ENCODE measurements at regions of chr17 and their contacts with region 1.

Region 1: GRCh38 chr17:76726231-76726775 is at the start of gene JMJD6:
- DNase-seq: peak in 5 of 9 experiments; percentile 88 to 95 (median 93)
- ATAC-seq: peak; percentile 77
- H3K4me3 ChIP-seq: peak within 1 kb of the TSS; percentile 87 to 92
- H3K4me3 Mint-ChIP-seq: peak within 1 kb of the TSS; percentile 99
- H3K27ac ChIP-seq: peak within 1 kb of the TSS; percentile 98 to 99
- H3K27ac Mint-ChIP-seq: peak within 1 kb of the TSS; percentile 99
- H3K4me1 ChIP-seq: peaks cover 46% of the 10 kb centered on the region
- H3K4me1 Mint-ChIP-seq: peaks cover 57% of the 10 kb centered on the region
- H3K27me3 ChIP-seq: no peaks in the 10 kb centered on the region
- H3K27me3 Mint-ChIP-seq: no peaks in the 10 kb centered on the region
- CTCF ChIP-seq: no peak
- total RNA-seq, gene JMJD6: 316 to 336 TPM

Region 2: DNA sequence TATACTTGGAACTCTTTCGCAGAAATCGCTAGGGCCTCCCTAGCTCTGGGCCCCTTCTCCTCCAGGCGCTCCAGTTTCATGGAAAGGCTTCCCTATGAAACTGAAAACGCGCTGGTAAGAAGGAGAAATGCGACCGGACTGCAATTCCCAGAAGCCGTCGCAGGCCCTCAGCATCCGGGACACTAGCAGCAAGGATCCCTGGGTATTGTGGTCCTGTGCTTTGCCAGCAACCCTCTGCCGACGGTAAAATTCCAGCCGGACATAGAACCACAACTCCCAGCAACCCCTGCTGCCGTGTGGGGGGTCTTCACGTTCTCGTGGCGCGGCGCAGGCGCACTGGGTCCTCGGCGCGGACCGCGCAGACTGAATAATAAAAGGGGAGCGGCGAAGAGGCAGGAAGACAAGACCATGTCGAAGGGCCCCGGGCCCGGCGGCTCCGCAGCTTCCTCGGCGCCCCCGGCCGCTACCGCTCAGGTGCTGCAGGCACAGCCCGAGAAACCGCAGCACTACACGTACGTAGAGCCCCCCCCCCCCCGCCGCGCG is 941.8 kb before region 1 on chr17 and contains the start of gene UNK:
- CTCF ChIA-PET with region 1: no interaction called
- POLR2A ChIA-PET with region 1: no interaction called
- intact Hi-C with region 1: loop called in 1 of 2 experiments (anchors 2 kb)
- DNase-seq: peak; percentile 91 to 99 (median 96)
- ATAC-seq: peak; percentile 64
- H3K4me3 ChIP-seq: peak within 1 kb of the TSS; percentile 57 to 78
- H3K4me3 Mint-ChIP-seq: peak within 1 kb of the TSS; percentile 93
- H3K27ac ChIP-seq: peak within 1 kb of the TSS; percentile 95 to 100
- H3K27ac Mint-ChIP-seq: peak within 1 kb of the TSS; percentile 98
- H3K4me1 ChIP-seq: peaks cover 39% of the 10 kb centered on the region
- H3K4me1 Mint-ChIP-seq: peaks cover 49% of the 10 kb centered on the region
- H3K27me3 ChIP-seq: no peaks in the 10 kb centered on the region
- H3K27me3 Mint-ChIP-seq: no peaks in the 10 kb centered on the region
- CTCF ChIP-seq: no peak
- total RNA-seq, gene UNK: 37.3 to 42.8 TPM

Region 3: GRCh38 chr17:76753061-76753961 is 27.0 kb after region 1 on chr17:
- CTCF ChIA-PET with region 1: interaction called, 3 read pairs
- POLR2A ChIA-PET with region 1: interaction called, 4 read pairs
- intact Hi-C with region 1: loop called in 1 of 2 experiments (anchors 1 kb)
- DNase-seq: peak in 6 of 9 experiments; percentile 16 to 87 (median 58)
- ATAC-seq: peak; percentile 82
- H3K4me3 ChIP-seq: peak overlapping the region; percentile 40 to 54
- H3K4me3 Mint-ChIP-seq: peak overlapping the region; percentile 84
- H3K27ac ChIP-seq: peak overlapping the region; percentile 86 to 93
- H3K27ac Mint-ChIP-seq: peak overlapping the region; percentile 98
- H3K4me1 ChIP-seq: peaks cover 20% of the 10 kb centered on the region
- H3K4me1 Mint-ChIP-seq: peaks cover 23% of the 10 kb centered on the region
- H3K27me3 ChIP-seq: no peaks in the 10 kb centered on the region
- H3K27me3 Mint-ChIP-seq: no peaks in the 10 kb centered on the region
- CTCF ChIP-seq: no peak

Region 4: GRCh38 chr17:76772842-76773525 is 46.7 kb after region 1 on chr17:
- CTCF ChIA-PET with region 1: interaction called, 3 read pairs
- POLR2A ChIA-PET with region 1: interaction called, 5 read pairs
- intact Hi-C with region 1: loop called in 1 of 2 experiments (anchors 1 kb)
- DNase-seq: peak in 8 of 9 experiments; percentile 32 to 89 (median 62)
- ATAC-seq: peak; percentile 88
- H3K4me3 ChIP-seq: peak overlapping the region; percentile 30 to 39
- H3K4me3 Mint-ChIP-seq: peak overlapping the region; percentile 70
- H3K27ac ChIP-seq: peak overlapping the region; percentile 60 to 87
- H3K27ac Mint-ChIP-seq: peak overlapping the region; percentile 97
- H3K4me1 ChIP-seq: peaks cover 11% of the 10 kb centered on the region
- H3K4me1 Mint-ChIP-seq: peaks cover 20% of the 10 kb centered on the region
- H3K27me3 ChIP-seq: no peaks in the 10 kb centered on the region
- H3K27me3 Mint-ChIP-seq: no peaks in the 10 kb centered on the region
- CTCF ChIP-seq: no peak

Region 5: GRCh38 chr17:76816590-76817135 is 90.4 kb after region 1 on chr17:
- CTCF ChIA-PET with region 1: no interaction called
- POLR2A ChIA-PET with region 1: no interaction called
- intact Hi-C with region 1: loop called in 1 of 2 experiments (anchors 5 kb)
- DNase-seq: peak; percentile 14 to 78 (median 65)
- ATAC-seq: peak; percentile 97
- H3K4me3 ChIP-seq: no peak overlapping the region
- H3K4me3 Mint-ChIP-seq: peak overlapping the region; percentile 3
- H3K27ac ChIP-seq: no peak overlapping the region
- H3K27ac Mint-ChIP-seq: no peak overlapping the region
- H3K4me1 ChIP-seq: peaks cover 7% of the 10 kb centered on the region
- H3K4me1 Mint-ChIP-seq: peaks cover 8% of the 10 kb centered on the region
- H3K27me3 ChIP-seq: no peaks in the 10 kb centered on the region
- H3K27me3 Mint-ChIP-seq: no peaks in the 10 kb centered on the region
- CTCF ChIP-seq: peak; percentile 76

Region 6: DNA sequence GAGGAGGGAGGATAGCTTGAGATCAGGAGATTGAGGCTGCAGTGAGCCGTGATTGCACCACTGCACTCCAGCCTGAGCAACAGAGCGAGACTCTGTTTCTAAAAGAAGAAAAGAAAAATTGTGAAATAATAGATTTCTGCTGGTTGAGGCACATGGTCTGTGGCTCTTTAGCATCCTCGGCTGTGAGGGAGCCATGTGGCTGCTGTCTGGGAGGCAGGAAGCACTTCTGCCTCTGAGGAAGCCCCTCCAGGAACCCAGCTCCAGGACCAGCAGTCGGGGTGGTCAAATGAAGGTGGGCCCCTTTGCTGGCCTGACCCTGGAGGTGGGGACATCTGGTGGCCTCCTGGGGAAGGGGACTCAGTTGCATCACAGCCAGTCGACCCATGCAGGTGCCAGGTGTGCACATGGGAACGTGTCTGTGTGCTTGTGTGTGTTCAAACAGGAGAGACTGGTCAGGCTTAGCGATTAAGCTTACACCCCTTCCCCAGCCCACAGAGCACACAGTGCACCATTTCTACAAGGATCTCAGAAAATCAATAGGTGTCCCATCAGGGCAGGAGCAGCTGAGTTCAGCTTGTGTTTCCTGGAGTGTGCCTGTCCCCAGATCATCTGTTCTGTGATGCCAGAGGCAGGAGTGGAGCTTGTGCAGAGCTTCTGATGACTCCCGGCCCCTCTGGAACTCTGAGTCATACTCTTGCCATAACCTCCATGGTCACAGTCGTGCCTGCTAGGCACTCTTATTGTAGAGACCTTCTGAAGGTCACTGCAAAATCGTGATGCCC is 117.6 kb after region 1 on chr17:
- CTCF ChIA-PET with region 1: no interaction called
- POLR2A ChIA-PET with region 1: no interaction called
- intact Hi-C with region 1: loop called in 1 of 2 experiments (anchors 1 kb)
- DNase-seq: no peak
- ATAC-seq: no peak
- H3K4me3 ChIP-seq: no peak overlapping the region
- H3K4me3 Mint-ChIP-seq: no peak overlapping the region
- H3K27ac ChIP-seq: no peak overlapping the region
- H3K27ac Mint-ChIP-seq: no peak overlapping the region
- H3K4me1 ChIP-seq: peaks cover 8% of the 10 kb centered on the region
- H3K4me1 Mint-ChIP-seq: peaks cover 8% of the 10 kb centered on the region
- H3K27me3 ChIP-seq: peaks cover 23 to 26% of the 10 kb centered on the region in 2 experiments
- H3K27me3 Mint-ChIP-seq: peaks cover 56% of the 10 kb centered on the region
- CTCF ChIP-seq: no peak

Region 7: GRCh38 chr17:76884971-76885893 is 158.9 kb after region 1 on chr17:
- CTCF ChIA-PET with region 1: no interaction called
- POLR2A ChIA-PET with region 1: no interaction called
- intact Hi-C with region 1: no loop called
- DNase-seq: no peak
- ATAC-seq: no peak
- H3K4me3 ChIP-seq: no peak overlapping the region
- H3K4me3 Mint-ChIP-seq: no peak overlapping the region
- H3K27ac ChIP-seq: no peak overlapping the region
- H3K27ac Mint-ChIP-seq: no peak overlapping the region
- H3K4me1 ChIP-seq: no peaks in the 10 kb centered on the region
- H3K4me1 Mint-ChIP-seq: no peaks in the 10 kb centered on the region
- H3K27me3 ChIP-seq: no peaks in the 10 kb centered on the region
- H3K27me3 Mint-ChIP-seq: no peaks in the 10 kb centered on the region
- CTCF ChIP-seq: no peak

Measured in CD8-positive, alpha-beta T cell (primary cell).